Activated CD4-positive, alpha-beta T cell treated with anti-CD3 and anti-CD28 coated beads, Interleukin-2, amount 10 ng/mL, durations not matched to agents 24 days and 14 days (primary cell): ENCODE measurements at regions of chr4 and their contacts with region 1.

Region 1: GRCh38 chr4:84750253-84750959 is 167.5 kb downstream of the CDS1 start:
- DNase-seq: no peak
- H3K4me3 Mint-ChIP-seq: no peak overlapping the region
- H3K27ac Mint-ChIP-seq: no peak overlapping the region
- H3K4me1 Mint-ChIP-seq: no peaks in the 10 kb centered on the region
- H3K27me3 Mint-ChIP-seq: peaks cover 2% of the 10 kb centered on the region

Region 2: DNA sequence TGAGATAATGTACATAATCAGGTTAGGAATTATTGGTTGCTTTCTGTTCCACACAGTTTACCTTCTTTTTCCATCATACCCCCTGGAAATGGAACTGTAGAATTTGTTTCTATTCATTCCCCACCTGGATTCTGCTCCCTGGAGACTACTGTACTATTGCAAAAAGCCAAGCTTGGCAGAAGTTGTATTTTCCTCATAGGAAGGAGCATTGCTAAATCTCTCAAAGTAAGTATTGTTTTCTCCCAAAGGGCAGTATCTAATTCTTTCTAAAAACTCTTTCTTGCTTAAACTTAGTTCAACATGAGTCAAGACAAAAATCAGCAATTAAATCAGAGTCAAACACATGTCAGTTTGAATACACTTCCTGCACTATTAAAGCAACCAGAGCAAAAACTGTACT is 31.3 kb before region 1 on chr4:
- intact Hi-C with region 1: no loop called
- DNase-seq: no peak
- H3K4me3 Mint-ChIP-seq: no peak overlapping the region
- H3K27ac Mint-ChIP-seq: no peak overlapping the region
- H3K4me1 Mint-ChIP-seq: no peaks in the 10 kb centered on the region
- H3K27me3 Mint-ChIP-seq: peaks cover 3% of the 10 kb centered on the region

Region 3: DNA sequence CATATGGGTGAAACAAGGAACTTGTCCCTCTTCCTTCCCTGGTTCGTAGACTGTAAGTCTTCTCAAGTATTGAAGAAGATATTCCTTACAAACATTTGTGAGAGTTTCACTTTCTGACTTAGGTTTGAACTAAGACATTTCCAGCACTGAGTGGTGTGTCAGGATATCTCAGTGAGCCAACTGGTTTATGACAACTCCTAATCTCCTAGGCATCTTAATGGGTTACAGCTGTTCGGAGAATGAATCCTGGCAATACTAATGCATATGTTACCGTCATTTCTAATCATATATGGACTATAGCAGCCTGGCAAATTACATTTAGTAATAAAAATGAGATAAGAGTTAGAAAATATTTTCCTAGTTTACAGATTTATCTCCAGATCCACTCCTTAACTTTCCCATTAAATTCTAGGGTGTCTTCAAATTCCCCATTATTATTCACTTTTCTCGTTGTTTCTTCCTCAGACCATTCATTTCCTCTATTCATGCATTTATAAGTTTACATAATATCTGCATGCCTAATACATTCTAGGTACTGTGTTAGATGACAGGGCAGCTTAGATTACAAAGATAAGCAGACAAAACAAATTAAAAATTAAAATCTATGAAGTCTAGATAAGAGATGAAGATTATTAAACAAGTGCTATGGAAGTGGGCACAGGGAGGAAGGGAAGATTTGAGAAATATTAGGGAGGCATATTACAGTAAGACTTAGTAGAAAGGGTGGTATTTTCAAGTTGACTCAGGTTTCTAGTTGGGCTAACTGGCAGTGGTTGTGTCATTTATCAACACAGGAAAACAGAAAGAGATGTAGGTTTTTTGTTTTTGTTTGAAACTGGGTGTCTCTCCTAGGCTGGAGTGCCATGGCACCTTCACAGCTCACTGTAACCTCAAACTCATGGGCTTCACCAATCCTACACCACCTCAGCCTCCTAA is 42.2 kb after region 1 on chr4:
- intact Hi-C with region 1: no loop called
- DNase-seq: no peak
- H3K4me3 Mint-ChIP-seq: no peak overlapping the region
- H3K27ac Mint-ChIP-seq: no peak overlapping the region
- H3K4me1 Mint-ChIP-seq: no peaks in the 10 kb centered on the region
- H3K27me3 Mint-ChIP-seq: no peaks in the 10 kb centered on the region

Region 4: GRCh38 chr4:84966383-84967242 is 216.2 kb after region 1 on chr4 and contains the start of gene WDFY3:
- intact Hi-C with region 1: loop called (anchors 5 kb)
- DNase-seq: peak; percentile 58
- H3K4me3 Mint-ChIP-seq: peak within 1 kb of the TSS; percentile 83
- H3K27ac Mint-ChIP-seq: peak within 1 kb of the TSS; percentile 16
- H3K4me1 Mint-ChIP-seq: peaks cover 7% of the 10 kb centered on the region
- H3K27me3 Mint-ChIP-seq: peaks cover 31% of the 10 kb centered on the region
- total RNA-seq, gene WDFY3: 0.59 and 0.75 TPM in 2 replicates

Region 5: DNA sequence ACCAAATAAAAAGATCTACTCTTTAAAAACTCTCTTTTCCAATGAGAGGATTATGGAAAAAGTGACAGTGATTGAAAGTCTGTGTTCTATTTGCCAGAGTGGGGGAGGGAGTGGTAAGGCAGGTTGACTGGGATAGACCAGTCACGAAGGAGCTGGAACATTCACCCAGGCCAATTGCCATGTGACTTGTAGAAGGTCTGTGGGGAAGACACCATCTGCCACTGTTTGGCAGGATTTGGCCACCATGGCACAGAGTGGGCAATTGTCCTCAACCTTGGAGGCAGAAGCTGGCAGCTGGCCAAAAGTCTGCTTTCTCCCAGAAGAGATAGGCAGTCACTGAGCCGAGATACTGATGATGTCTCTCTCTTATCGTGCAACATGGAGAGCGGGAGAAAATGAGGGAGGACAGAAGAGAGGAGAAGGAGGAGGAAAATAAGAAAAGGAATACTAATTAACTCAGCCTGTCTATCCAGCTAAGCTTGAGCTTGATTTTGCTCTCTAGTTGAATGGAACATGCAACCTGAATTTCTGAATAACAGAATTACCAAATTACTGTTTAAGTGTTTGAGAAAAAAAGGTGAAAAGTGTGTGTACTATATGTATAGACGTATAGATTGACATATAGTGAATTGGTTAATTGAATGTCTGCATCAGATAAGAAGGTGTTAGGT is 991.6 kb after region 1 on chr4:
- intact Hi-C with region 1: no loop called
- DNase-seq: no peak
- H3K4me3 Mint-ChIP-seq: no peak overlapping the region
- H3K27ac Mint-ChIP-seq: no peak overlapping the region
- H3K4me1 Mint-ChIP-seq: no peaks in the 10 kb centered on the region
- H3K27me3 Mint-ChIP-seq: no peaks in the 10 kb centered on the region